ENCODE measurements at regions of chr12 and their contacts with region 1.

Region 1: GRCh38 chr12:57520053-57520871 is at the start of gene DDIT3:
- H3K4me3 ChIP-seq: peak within 1 kb of the TSS; percentile 79
- H3K27ac ChIP-seq: peak within 1 kb of the TSS; percentile 94
- H3K4me1 ChIP-seq: peaks cover 13% of the 10 kb centered on the region
- CTCF ChIP-seq: peak; percentile 76

Region 2: DNA sequence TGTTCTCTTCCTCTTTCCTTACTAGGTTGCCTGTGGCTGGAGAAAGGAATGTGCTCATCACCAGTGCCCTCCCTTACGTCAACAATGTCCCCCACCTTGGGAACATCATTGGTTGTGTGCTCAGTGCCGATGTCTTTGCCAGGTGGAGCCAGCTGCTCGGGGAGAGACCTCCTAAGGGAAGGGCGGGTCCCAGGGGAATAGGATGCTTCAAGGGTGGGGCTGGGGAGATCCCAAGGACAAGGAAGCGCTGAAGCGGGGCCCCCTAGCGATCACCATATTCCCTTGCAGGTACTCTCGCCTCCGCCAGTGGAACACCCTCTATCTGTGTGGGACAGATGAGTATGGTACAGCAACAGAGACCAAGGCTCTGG is 22.1 kb before region 1 on chr12:
- CTCF ChIA-PET with region 1: no interaction called
- POLR2A ChIA-PET with region 1: interaction called, 15 read pairs
- H3K4me3 ChIP-seq: no peak overlapping the region
- H3K27ac ChIP-seq: peak overlapping the region; percentile 24; the same call in 1 of the 2 replicates
- H3K4me1 ChIP-seq: no peaks in the 10 kb centered on the region
- CTCF ChIP-seq: no peak

Region 3: DNA sequence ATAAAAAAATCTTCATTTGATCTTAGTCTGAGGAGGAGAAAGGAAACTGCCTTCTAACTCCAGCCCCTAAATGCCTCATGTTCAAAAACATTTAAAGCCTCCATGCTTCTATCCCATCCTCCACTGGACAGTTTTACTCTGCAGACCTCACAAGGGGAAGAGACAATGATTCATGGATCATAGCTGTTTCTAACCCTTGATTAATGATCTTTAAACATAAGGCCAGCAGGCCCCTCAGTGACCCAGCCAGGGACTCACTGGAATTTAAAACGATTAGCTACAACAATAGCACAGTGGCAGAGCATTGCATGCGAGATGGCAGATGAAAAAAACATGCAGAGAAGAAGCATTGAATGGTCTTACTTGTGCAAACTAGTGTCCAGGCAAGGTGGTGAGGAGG is 20.7 kb after region 1 on chr12:
- CTCF ChIA-PET with region 1: interaction called, 3 read pairs
- POLR2A ChIA-PET with region 1: interaction called, 16 read pairs
- H3K4me3 ChIP-seq: no peak overlapping the region
- H3K27ac ChIP-seq: no peak overlapping the region
- H3K4me1 ChIP-seq: peaks cover 3% of the 10 kb centered on the region
- CTCF ChIP-seq: no peak

Region 4: GRCh38 chr12:57546438-57547383 is 26.4 kb after region 1 on chr12 and contains the start of gene DCTN2:
- CTCF ChIA-PET with region 1: no interaction called
- POLR2A ChIA-PET with region 1: interaction called, 16 read pairs
- H3K4me3 ChIP-seq: peak within 1 kb of the TSS; percentile 95
- H3K27ac ChIP-seq: peak within 1 kb of the TSS; percentile 78
- H3K4me1 ChIP-seq: peaks cover 5% of the 10 kb centered on the region
- CTCF ChIP-seq: peak; percentile 71; the same call in 1 of the 2 replicates

Measured in HEK293 (cell line).